Posterior vena cava (tissue), 2 donors: ENCODE measurements at regions of chr11 and their contacts with region 1.

Region 1: GRCh38 chr11:59668950-59669610 is at the start of gene PATL1:
- DNase-seq: peak; percentile 100
- total RNA-seq, gene PATL1: 19.4 to 24.2 TPM

Region 2: DNA sequence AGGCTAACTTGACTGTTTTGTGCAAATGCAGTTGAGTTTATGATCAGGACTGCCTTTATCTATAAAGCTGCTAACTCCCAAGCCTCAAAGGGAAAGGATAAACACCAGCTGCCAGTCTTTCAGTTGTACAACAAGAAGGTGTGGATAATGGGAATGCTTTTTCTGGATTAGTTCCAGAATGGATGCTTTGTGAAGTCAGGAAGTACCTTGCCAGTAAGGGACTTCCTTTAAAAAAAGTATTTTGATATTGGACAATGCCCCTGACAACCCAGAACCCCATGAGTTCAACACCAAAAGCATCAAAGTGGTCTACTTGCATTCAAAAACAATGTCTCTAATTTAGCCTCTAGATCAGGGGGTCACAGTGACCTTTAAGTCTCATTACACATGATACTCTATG is 274.9 kb before region 1 on chr11:
- intact Hi-C with region 1: no loop called
- DNase-seq: no peak

Region 3: GRCh38 chr11:59550368-59550841 is 118.7 kb before region 1 on chr11:
- intact Hi-C with region 1: loop called in 1 of 2 experiments (anchors 10 kb)
- DNase-seq: peak; percentile 89

Region 4: GRCh38 chr11:59615637-59616395 is 53.3 kb before region 1 on chr11 and contains the start of gene OSBP:
- intact Hi-C with region 1: loop called in 1 of 2 experiments (anchors 10 kb)
- DNase-seq: peak; percentile 99
- total RNA-seq, gene OSBP: 29.7 to 35.7 TPM

Region 5: DNA sequence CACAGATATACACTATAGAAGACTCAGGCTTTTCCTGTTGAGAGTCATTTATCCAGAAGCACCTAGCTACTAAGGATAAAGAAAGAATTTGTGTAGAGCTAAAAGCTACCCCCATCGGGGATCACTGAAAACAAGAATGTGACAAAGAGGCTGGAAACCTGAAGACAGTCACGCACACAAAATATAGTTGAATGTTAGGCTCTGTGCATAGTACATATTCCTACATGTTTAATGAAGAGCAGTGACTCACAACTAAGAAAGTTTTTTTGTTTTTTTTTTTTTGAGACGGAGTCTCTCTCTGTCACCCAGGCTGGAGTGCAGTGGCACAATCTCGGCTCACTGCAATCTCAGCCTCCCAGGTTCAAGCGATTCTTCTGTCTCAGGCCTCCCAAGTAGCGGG is 36.2 kb after region 1 on chr11:
- intact Hi-C with region 1: loop called in 1 of 2 experiments (anchors 2 kb)
- DNase-seq: no peak